Activated naive CD8-positive, alpha-beta T cell treated with anti-CD3 and anti-CD28 coated beads, Interleukin-2, amount 10 ng/mL, durations not matched to agents 7 days and 5 days (primary cell): ENCODE measurements at regions of chr16 and their contacts with region 1.

Region 1: DNA sequence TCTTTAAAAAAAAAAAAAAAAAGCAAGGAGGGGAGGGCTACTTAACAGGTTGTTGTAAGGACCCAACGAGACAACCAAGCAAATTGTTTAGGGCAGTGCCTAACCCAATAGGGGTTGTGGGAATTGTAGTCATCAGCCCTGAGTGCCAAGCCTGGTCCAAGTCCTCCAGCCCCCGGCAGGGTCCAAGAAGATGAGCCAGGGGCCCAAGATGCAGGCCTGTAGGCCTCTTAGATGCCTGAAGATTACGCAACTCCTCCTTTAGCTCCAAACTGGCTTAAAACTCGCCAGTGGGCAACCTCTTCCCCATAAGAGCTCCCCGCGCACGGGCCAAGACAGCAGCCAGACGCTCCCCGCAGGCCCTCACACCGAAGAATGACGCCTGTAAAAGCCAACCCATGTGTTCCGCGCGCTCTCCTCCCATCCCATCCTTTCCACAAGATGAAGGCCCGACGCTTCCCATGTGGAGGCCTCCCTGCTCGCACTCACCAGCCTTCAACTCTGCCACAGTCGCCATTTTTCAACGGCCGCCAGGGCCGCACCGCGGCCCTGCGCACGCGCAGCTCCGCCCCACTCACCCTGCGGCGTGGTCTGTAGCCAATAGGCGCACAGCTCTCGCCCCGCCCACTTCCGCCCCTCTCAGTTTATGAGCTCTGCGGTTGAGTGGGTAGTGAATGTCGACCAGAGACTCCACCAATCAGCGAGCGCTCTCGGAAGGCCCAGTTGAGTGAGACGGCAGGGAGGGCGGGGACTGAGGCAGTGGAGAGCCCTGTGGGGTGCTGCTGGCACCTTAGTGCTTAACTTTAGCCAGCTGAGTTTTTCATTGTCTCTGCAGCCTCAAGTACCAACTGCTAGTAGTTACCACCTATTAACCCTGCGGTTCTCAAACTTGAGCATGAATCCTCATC is at the start of gene CEP20:
- DNase-seq: peak; percentile 99
- ATAC-seq: peak; percentile 98
- H3K4me3 Mint-ChIP-seq: peak within 1 kb of the TSS; percentile 96
- H3K27ac Mint-ChIP-seq: peak within 1 kb of the TSS; percentile 97
- H3K4me1 Mint-ChIP-seq: peaks cover 29% of the 10 kb centered on the region
- H3K27me3 Mint-ChIP-seq: no peaks in the 10 kb centered on the region
- total RNA-seq, gene CEP20: 36.6 to 47.3 TPM

Region 2: GRCh38 chr16:15874745-15875314 is 13.5 kb before region 1 on chr16:
- POLR2A ChIA-PET with region 1: interaction called, 10 read pairs
- DNase-seq: no peak
- ATAC-seq: no peak
- H3K4me3 Mint-ChIP-seq: no peak overlapping the region
- H3K27ac Mint-ChIP-seq: no peak overlapping the region
- H3K4me1 Mint-ChIP-seq: no peaks in the 10 kb centered on the region
- H3K27me3 Mint-ChIP-seq: no peaks in the 10 kb centered on the region

Region 3: GRCh38 chr16:15942931-15943690 is 54.8 kb after region 1 on chr16:
- POLR2A ChIA-PET with region 1: interaction called, 11 read pairs
- DNase-seq: no peak
- ATAC-seq: no peak
- H3K4me3 Mint-ChIP-seq: no peak overlapping the region
- H3K27ac Mint-ChIP-seq: peak overlapping the region; percentile 38
- H3K4me1 Mint-ChIP-seq: peaks cover 28% of the 10 kb centered on the region
- H3K27me3 Mint-ChIP-seq: no peaks in the 10 kb centered on the region

Region 4: DNA sequence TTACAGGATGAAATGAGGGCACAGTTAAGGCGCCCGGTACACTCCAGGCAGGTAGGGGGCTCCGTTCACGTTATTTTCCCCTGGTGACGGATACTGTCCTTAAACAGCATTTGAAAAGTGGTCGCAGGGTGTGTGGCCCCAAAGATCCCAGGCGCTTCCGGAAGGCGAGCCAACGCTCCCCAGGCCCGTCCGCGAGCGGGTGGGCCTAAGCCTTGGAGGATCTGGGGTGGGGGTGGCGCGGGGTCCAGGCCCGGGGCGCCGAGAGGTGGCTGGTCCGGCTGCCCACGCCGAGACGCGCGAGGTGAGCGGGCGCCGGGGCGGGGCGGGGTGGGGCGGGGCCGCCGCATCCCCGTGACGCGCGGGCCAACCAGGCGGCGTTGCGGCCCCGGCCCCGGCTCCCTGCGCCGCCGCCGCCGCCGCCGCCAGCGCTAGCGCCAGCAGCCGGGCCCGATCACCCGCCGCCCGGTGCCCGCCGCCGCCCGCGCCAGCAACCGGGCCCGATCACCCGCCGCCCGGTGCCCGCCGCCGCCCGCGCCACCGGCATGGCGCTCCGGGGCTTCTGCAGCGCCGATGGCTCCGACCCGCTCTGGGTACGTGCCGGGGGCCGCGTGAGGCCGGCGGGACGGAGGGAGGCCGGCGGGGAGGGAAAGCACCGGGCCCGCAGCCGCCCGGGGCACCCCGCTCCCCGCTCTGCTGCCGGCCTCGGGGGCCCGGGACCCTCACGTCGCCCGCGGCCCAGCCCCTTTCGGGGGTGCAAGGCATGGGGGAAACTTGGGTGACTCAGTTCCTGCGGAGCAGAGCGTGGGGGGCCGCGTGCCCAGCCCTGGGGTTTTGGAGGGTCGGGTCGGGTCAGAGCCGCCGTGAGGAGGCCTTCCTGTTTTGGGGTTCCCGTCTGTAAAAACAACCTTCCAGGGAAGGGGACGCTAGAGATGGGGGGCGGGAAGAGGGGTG is 61.2 kb after region 1 on chr16 and contains the start of gene ABCC1:
- POLR2A ChIA-PET with region 1: interaction called, 20 read pairs
- DNase-seq: peak; percentile 69
- ATAC-seq: peak; percentile 71
- H3K4me3 Mint-ChIP-seq: peak within 1 kb of the TSS; percentile 90
- H3K27ac Mint-ChIP-seq: peak within 1 kb of the TSS; percentile 97
- H3K4me1 Mint-ChIP-seq: peaks cover 32% of the 10 kb centered on the region
- H3K27me3 Mint-ChIP-seq: no peaks in the 10 kb centered on the region
- total RNA-seq, gene ABCC1: 55.2 to 62.5 TPM